ENCODE measurements at regions of chr9 and their contacts with region 1.

Region 1: DNA sequence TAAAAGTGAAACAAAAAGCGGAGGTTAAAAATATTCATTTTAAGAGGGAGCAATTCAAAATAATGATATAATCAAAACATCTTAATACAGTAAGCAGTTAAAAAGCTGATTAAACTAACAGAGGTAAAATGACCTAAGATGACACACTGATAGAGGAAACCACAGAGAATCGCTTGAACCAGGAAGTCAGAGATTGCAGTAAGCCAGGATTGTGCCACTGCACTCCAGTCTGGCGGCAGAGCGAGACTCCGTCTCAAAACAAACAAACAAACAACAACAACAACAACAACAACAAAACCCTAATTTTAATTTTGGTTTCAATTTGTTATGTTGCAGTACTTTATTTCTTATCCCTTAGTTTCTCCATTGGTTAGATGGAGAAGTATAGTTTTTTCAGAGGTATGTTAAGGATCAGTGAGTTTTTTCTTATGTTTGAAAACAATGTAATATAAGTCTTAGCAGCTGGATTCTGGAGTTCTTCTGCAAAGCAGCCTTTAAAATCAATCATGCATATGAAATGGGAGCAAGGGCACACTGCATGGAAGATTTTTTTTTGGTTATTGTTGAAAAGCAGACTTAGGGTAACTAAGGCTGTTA is 58.5 kb downstream of the MLANA start:
- DNase-seq: peak; percentile 37
- ATAC-seq: peak; percentile 85
- H3K4me3 Mint-ChIP-seq: peak overlapping the region; percentile 12
- H3K27ac Mint-ChIP-seq: no peak overlapping the region
- H3K4me1 Mint-ChIP-seq: peaks cover 18% of the 10 kb centered on the region
- H3K27me3 Mint-ChIP-seq: no peaks in the 10 kb centered on the region

Region 2: GRCh38 chr9:5982317-5982716 is 33.1 kb after region 1 on chr9:
- CTCF ChIA-PET with region 1: no interaction called
- POLR2A ChIA-PET with region 1: no interaction called
- intact Hi-C with region 1: loop called in 1 of 2 experiments (anchors 5 kb)
- DNase-seq: no peak
- ATAC-seq: no peak
- H3K4me3 Mint-ChIP-seq: no peak overlapping the region
- H3K27ac Mint-ChIP-seq: no peak overlapping the region
- H3K4me1 Mint-ChIP-seq: peaks cover 12% of the 10 kb centered on the region
- H3K27me3 Mint-ChIP-seq: no peaks in the 10 kb centered on the region